KBM-7 (cell line): ENCODE measurements at regions of chr20 and their contacts with region 1.

Region 1: GRCh38 chr20:37276494-37277252 is 12.8 kb upstream of the MANBAL start:
- DNase-seq: peak; percentile 33

Region 2: DNA sequence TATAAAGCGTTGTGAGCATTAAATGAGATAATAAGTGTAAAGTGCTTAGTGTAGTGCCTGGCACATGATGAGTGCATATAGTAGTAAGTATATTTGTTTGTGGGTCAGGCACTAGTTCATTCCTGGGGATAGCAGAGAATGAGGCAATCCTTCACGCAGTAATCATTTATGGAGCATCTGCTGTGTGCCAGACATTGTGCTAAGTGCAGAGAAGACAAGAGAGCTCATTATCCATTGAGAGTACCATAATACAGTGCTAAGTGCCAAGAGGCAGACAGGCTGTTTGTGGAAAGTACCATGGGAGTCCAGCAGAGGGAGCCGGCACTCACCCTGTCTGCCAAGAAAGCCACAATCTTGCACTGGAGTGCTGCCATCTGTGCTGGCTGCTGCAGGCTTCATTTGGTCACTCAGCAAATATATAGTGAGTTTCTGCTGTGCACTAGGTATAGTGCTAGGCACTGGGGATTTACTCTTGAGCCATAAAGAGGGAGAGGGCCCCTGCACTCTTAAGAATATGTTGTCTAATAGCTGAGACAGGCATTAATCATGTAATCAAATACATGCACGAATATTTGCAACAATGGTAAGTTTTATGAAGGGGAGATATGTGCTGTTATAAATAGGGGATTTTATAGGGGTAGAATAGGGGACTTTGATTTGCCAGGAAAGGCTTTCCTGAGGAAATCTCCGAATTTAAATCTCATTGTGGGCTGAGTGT is 84.4 kb before region 1 on chr20:
- in situ Hi-C with region 1: no loop called
- DNase-seq: peak; percentile 91

Region 3: GRCh38 chr20:37449276-37449675 is 172.6 kb after region 1 on chr20:
- in situ Hi-C with region 1: no loop called
- DNase-seq: no peak

Region 4: GRCh38 chr20:37534401-37535157 is 257.9 kb after region 1 on chr20:
- in situ Hi-C with region 1: loop called (anchors 10 kb)
- DNase-seq: peak; percentile 93